ENCODE measurements at regions of chrX and their contacts with region 1.

Region 1: DNA sequence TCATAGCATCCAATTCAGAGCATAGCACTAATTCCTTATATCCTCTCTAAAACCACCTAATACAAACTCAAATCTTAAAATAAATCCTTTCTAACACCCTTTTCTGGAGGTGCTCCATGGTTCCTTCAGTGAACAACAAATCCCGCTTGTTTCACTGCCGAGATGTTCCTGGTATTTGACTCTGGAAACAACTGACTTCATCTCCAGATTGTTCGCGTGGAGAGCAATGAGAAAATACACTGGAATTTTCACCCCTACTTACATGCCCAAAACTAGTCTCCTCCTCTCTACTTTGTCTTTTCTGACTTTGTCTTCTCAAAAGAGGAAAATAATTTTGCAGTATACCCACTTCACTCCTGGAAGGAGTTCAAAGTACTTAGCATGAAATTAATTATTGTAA is 129.0 kb downstream of the PLS3 start:
- DNase-seq: no peak
- H3K4me3 ChIP-seq: no peak overlapping the region
- H3K27ac ChIP-seq: peak overlapping the region in 2 of 5 donors; percentile 11 to 44
- H3K4me1 ChIP-seq: no peaks in the 10 kb centered on the region
- H3K27me3 ChIP-seq: peaks cover 8% of the 10 kb centered on the region
- CTCF ChIP-seq: no peak
- POLR2A ChIP-seq: no peak

Region 2: GRCh38 chrX:115378471-115378870 is 311.5 kb before region 1 on chrX:
- intact Hi-C with region 1: no loop called
- DNase-seq: no peak
- H3K4me3 ChIP-seq: no peak overlapping the region
- H3K27ac ChIP-seq: no peak overlapping the region
- H3K4me1 ChIP-seq: no peaks in the 10 kb centered on the region
- H3K27me3 ChIP-seq: no peaks in the 10 kb centered on the region
- CTCF ChIP-seq: peak in 2 of 6 experiments; percentile 8 to 15
- POLR2A ChIP-seq: no peak

Region 3: DNA sequence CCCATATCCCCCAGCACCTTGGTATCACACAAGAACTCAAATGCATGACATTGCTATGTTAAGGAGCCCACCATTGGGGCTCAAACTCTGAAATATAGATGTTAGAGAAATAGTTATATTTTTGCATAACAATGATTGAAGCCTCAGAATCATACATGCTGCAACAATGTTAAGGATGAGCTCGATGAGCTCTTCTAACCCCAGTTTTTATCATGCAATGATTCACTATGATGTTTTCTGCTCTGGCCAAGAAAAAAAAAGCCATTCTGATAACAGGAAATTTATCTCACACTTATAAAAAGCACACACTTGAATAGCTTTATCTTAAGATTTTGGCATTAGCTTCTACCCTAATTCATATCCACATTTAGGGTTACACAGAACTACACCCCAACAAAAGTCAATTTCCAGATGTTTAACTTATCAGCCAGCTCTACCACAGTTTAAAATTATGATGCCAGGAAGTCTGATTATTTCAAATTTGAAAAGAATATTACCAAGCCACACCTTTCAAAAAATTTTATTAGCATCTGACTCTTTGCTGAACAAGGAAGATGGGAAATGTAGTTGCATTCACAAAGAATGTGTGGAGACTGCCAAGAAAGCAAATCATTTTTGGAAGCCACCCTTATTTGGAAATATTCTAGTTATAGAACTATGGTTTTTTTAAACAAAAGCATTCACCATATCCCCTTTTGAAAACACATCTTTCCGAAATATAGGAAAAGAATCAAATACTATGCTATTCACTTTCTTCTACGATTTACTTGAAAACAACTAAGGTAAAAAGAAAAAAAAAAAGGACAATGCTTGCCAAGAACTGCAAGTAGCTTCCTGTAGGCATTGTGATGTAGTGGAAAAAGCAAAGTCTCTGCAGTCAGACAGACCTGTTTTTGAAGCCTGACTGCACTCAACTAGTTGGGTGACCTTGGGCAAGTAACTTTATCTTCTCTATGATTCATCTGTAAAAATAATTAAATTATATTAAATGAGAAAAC is 229.7 kb before region 1 on chrX:
- intact Hi-C with region 1: no loop called
- DNase-seq: peak in 3 of 7 donors; percentile 7 to 33 (median 19)
- H3K4me3 ChIP-seq: no peak overlapping the region
- H3K27ac ChIP-seq: peak overlapping the region in 3 of 5 donors; percentile 20 to 51 (median 42)
- H3K4me1 ChIP-seq: peaks cover 0 to 7% of the 10 kb centered on the region in 2 donors
- H3K27me3 ChIP-seq: peaks cover 15% of the 10 kb centered on the region
- CTCF ChIP-seq: no peak
- POLR2A ChIP-seq: no peak

Region 4: DNA sequence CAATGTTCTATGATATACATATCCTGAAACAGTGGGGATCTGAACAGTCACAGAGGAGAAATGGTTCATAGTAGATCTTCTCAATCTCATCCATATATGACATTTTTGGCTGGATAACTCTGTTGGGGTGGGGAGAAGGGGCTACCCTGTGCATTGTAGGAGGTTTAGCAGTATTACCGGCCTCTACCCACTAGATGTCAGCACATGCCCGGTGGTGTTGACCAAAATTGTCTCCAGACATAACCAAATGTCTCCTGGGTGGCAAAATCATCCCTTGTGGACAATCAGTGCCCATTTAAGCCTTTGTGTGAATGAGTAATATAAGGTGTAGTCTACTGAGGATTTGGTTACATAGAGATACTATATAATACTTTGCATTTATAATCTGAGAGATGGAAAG is 39.0 kb before region 1 on chrX:
- intact Hi-C with region 1: loop called in 1 of 2 experiments (anchors 5 kb)
- DNase-seq: peak; percentile 33 to 58 (median 49)
- H3K4me3 ChIP-seq: no peak overlapping the region
- H3K27ac ChIP-seq: no peak overlapping the region
- H3K4me1 ChIP-seq: peaks cover 0 to 11% of the 10 kb centered on the region in 2 donors
- H3K27me3 ChIP-seq: no peaks in the 10 kb centered on the region
- CTCF ChIP-seq: peak; percentile 47 to 65 (median 58)
- POLR2A ChIP-seq: no peak

Region 5: GRCh38 chrX:115702982-115703381 is 13.1 kb after region 1 on chrX:
- intact Hi-C with region 1: no loop called
- DNase-seq: no peak
- H3K4me3 ChIP-seq: no peak overlapping the region
- H3K27ac ChIP-seq: no peak overlapping the region
- H3K4me1 ChIP-seq: no peaks in the 10 kb centered on the region
- H3K27me3 ChIP-seq: peaks cover 9% of the 10 kb centered on the region
- CTCF ChIP-seq: no peak
- POLR2A ChIP-seq: no peak